ENCODE measurements at regions of chr12 and their contacts with region 1.

Region 1: DNA sequence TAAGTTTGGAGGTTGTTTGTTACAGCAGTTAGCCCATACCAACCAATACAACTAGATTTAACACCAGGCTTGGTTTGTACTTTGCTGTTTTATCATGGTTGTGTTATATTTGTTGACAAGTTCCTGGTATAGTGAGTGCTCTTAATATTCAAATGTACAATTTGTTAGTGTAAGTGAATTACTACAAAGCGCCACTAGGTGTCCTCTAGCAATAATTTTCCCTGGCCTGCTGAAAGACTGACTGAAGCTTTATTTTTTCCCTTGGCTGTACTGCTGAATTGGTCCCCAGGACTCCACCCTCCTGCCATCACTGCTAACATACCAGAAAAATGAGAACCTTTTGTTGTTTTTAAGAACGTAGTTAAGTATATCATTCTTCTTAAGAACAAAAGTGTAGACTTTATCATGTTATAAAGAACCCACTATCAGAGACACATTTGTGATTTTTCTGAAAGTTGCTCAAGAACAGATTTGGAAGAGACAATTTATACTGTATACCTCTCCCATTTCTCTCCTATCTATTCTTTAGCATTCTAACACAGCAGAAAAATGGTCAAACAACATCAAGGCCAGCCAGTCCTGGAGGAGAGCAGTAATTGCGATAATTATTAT is 75.3 kb upstream of the FAR2 start:
- DNase-seq: no peak
- ATAC-seq: peak; percentile 71

Region 2: DNA sequence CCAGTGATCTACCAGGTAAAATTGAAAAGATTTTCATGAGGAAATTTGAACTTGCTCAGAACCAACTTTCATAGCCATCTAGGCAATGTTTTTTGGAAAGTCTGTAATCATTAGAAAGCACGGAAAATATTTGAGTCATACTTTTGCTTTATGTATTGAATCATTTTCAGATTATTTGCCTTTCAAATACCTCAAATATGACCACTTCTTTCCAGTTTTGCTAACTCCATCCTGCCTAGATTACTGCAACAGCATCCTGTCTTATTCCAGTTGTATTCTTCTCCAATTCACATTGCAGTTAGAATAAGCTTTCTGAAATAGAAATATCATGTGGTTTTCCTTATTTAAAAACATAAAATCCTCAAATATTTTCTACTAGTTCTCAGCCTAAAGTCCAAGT is 164.4 kb before region 1 on chr12:
- intact Hi-C with region 1: no loop called
- DNase-seq: no peak
- ATAC-seq: no peak

Region 3: GRCh38 chr12:29317556-29318363 is 244.0 kb after region 1 on chr12:
- intact Hi-C with region 1: loop called (anchors 5 kb)
- DNase-seq: peak; percentile 49
- ATAC-seq: peak; percentile 98

Region 4: GRCh38 chr12:30026621-30027234 is 953.0 kb after region 1 on chr12:
- intact Hi-C with region 1: no loop called
- DNase-seq: no peak
- ATAC-seq: no peak

Measured in left ventricle myocardium superior (tissue), 1 donor.